ENCODE measurements at regions of chr17 and their contacts with region 1.

Region 1: DNA sequence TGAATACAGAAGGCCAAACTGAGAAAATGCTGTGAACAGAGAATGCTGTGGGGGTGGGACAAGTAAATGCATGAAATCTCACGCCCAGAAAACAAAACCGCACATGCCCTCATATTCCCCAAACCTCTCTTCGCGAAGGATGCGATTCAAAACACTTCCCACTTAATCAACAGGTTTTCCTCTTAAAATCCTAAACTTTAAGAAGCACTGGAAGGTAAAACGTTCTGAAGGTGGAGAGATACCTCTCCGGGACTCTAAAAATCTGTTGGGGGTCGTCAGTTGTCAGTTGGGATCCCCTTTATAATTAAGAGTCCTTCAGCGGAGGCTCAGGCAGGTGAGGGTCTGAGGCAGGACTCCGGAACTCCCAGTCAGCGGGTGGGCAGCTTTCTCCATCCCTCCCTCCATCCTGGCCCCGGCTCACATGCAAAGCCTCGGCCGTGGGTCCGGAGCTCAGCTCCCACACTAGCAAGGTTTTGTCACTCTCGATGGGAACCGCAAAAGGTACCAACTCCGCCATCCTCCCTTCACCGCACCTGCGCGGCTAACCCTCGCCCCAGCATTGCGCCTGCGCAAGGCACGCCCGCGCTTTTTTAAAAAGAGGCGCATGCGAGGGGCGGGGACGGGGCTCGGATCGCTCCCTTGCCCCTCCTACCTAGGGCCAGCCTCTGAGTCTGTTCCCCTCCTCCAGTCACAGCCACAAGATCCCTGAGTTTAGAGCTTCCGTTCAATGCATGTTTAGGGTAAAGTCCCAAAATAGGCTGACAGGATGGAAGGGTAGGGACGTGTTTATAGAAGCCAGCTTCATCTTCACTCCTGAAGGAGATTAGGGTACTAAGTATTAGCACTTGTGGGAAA is at the start of gene RDM1:
- DNase-seq: peak; percentile 89
- H3K4me3 Mint-ChIP-seq: peak within 1 kb of the TSS; percentile 88
- H3K27ac Mint-ChIP-seq: peak within 1 kb of the TSS; percentile 90
- H3K4me1 Mint-ChIP-seq: peaks cover 29% of the 10 kb centered on the region
- H3K27me3 Mint-ChIP-seq: peaks cover 18% of the 10 kb centered on the region
- total RNA-seq, gene RDM1: 1.7 and 2.3 TPM in 2 replicates

Region 2: DNA sequence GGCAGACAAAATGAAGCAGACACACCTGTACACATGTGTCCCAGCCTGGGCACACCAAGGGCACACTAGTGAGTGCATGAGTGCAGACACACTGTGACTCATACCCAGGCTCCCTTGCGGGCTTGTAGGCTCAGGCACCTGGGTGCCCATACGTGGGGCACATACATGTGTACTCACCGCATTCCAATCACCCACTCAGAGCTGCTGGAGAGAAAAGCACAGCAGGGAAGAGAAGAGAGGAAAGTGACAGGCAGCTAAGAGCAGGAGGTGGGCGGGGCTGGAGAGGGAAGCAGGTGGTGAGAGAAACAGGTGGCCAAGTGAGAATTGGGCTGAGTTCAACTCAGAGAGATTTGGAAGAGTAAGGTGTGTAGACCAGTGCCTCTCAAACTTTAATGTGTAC is 1297.1 kb before region 1 on chr17:
- intact Hi-C with region 1: no loop called
- DNase-seq: no peak
- H3K4me3 Mint-ChIP-seq: no peak overlapping the region
- H3K27ac Mint-ChIP-seq: no peak overlapping the region
- H3K4me1 Mint-ChIP-seq: no peaks in the 10 kb centered on the region
- H3K27me3 Mint-ChIP-seq: peaks cover 28% of the 10 kb centered on the region

Region 3: GRCh38 chr17:35898283-35899070 is 32.0 kb before region 1 on chr17:
- intact Hi-C with region 1: loop called (anchors 2 kb)
- DNase-seq: no peak
- H3K4me3 Mint-ChIP-seq: no peak overlapping the region
- H3K27ac Mint-ChIP-seq: peak overlapping the region; percentile 36
- H3K4me1 Mint-ChIP-seq: peaks cover 55% of the 10 kb centered on the region
- H3K27me3 Mint-ChIP-seq: peaks cover 2% of the 10 kb centered on the region

Measured in activated T-helper 1 cell treated with anti-CD3 and anti-CD28 coated beads, Interleukin-12 subunit alpha, Interleukin-12 subunit beta, Interleukin-2, Interleukin-4 antibody, amounts not matched to agents 30 ng/mL and 10 ng/mL and 1 ng/mL, durations not matched to agents 14 hours and 24 hours and 36 hours (primary cell).